ENCODE measurements at regions of chr17 and their contacts with region 1.

Region 1: GRCh38 chr17:31444026-31444425 is 52.6 kb downstream of the RAB11FIP4 start:
- DNase-seq: no peak
- ATAC-seq: no peak
- H3K4me3 ChIP-seq: no peak overlapping the region
- H3K27ac ChIP-seq: no peak overlapping the region
- H3K4me1 ChIP-seq: no peaks in the 10 kb centered on the region
- H3K27me3 ChIP-seq: no peaks in the 10 kb centered on the region
- CTCF ChIP-seq: no peak
- POLR2A ChIP-seq: no peak

Region 2: GRCh38 chr17:31524926-31525800 is 81.1 kb after region 1 on chr17:
- in situ Hi-C with region 1: loop called (anchors 5 kb)
- intact Hi-C with region 1: no loop called
- DNase-seq: peak; percentile 58 to 74
- ATAC-seq: peak; percentile 89 to 94
- H3K4me3 ChIP-seq: no peak overlapping the region
- H3K27ac ChIP-seq: no peak overlapping the region
- H3K4me1 ChIP-seq: no peaks in the 10 kb centered on the region
- H3K27me3 ChIP-seq: no peaks in the 10 kb centered on the region
- CTCF ChIP-seq: peak; percentile 86 to 95 (median 91)
- POLR2A ChIP-seq: no peak

Region 3: DNA sequence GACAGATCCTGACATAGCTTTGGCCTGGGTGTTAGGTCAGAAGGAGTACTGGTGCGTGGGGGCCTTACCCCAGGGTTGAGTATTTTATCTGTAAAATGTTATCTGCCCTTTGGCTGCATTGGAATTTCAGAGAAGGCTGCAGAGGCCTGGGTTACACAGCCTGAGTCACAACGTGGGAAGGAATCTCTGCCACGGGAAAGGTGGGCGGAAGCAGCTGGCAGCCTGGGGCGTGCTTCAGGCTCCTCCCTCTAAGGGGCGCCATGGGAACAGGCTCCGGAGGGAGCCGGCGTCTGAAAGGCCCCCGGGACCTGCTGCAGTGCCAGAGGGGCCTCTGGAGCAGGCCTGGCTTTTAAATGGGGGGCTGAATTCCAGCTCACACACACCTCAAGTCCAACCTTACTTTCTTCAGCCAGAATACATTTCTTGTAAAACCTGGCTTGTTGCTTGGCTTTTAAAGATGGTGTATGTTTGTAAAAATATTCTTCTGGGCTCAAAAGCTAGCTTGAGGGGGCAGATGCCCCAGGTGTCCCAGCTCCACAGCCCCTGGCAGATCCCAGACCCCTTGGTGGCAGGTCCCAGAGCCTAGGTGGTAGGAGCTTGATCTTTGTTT is 89.6 kb after region 1 on chr17:
- in situ Hi-C with region 1: loop called in 3 of 4 experiments (anchors 5 kb)
- intact Hi-C with region 1: no loop called
- DNase-seq: no peak
- ATAC-seq: peak in 1 of 2 donors; percentile 21
- H3K4me3 ChIP-seq: no peak overlapping the region
- H3K27ac ChIP-seq: no peak overlapping the region
- H3K4me1 ChIP-seq: no peaks in the 10 kb centered on the region
- H3K27me3 ChIP-seq: no peaks in the 10 kb centered on the region
- CTCF ChIP-seq: peak in 2 of 5 experiments; percentile 18 to 32
- POLR2A ChIP-seq: no peak